OCI-LY7 (cell line): ENCODE measurements at regions of chr9 and their contacts with region 1.

Region 1: DNA sequence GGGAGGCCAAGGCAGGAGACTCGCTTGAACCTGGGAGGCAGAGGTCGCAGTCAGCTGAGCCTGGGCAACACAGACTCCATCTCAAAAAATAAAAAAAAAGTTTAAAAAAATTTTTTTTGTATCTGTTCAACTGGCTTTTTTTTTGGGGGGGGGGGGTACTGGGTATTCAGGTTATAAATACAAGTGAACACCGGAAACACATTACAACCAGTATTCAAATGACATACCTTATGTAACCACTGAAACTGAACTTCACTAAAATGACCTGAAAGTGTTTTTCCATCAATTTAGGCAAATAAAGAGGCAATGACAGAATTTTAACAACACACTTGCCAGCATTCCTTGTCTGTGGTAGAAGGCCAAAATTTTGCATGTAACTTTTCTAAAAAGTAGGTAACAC is 33.5 kb downstream of the STRBP start:
- DNase-seq: peak; percentile 81
- H3K4me3 ChIP-seq: peak overlapping the region; percentile 39
- H3K27ac ChIP-seq: peak overlapping the region; percentile 88
- H3K4me1 ChIP-seq: peaks cover 93% of the 10 kb centered on the region
- CTCF ChIP-seq: no peak

Region 2: GRCh38 chr9:123251741-123252140 is 16.9 kb after region 1 on chr9:
- CTCF ChIA-PET with region 1: interaction called, 4 read pairs
- POLR2A ChIA-PET with region 1: interaction called, 29 read pairs
- intact Hi-C with region 1: no loop called
- DNase-seq: no peak
- H3K4me3 ChIP-seq: no peak overlapping the region
- H3K27ac ChIP-seq: no peak overlapping the region
- H3K4me1 ChIP-seq: peaks cover 31% of the 10 kb centered on the region
- CTCF ChIP-seq: no peak

Region 3: GRCh38 chr9:123262338-123262737 is 27.5 kb after region 1 on chr9:
- CTCF ChIA-PET with region 1: no interaction called
- POLR2A ChIA-PET with region 1: interaction called, 31 read pairs
- intact Hi-C with region 1: no loop called
- DNase-seq: no peak
- H3K4me3 ChIP-seq: no peak overlapping the region
- H3K27ac ChIP-seq: no peak overlapping the region
- H3K4me1 ChIP-seq: peaks cover 75% of the 10 kb centered on the region
- CTCF ChIP-seq: no peak

Region 4: DNA sequence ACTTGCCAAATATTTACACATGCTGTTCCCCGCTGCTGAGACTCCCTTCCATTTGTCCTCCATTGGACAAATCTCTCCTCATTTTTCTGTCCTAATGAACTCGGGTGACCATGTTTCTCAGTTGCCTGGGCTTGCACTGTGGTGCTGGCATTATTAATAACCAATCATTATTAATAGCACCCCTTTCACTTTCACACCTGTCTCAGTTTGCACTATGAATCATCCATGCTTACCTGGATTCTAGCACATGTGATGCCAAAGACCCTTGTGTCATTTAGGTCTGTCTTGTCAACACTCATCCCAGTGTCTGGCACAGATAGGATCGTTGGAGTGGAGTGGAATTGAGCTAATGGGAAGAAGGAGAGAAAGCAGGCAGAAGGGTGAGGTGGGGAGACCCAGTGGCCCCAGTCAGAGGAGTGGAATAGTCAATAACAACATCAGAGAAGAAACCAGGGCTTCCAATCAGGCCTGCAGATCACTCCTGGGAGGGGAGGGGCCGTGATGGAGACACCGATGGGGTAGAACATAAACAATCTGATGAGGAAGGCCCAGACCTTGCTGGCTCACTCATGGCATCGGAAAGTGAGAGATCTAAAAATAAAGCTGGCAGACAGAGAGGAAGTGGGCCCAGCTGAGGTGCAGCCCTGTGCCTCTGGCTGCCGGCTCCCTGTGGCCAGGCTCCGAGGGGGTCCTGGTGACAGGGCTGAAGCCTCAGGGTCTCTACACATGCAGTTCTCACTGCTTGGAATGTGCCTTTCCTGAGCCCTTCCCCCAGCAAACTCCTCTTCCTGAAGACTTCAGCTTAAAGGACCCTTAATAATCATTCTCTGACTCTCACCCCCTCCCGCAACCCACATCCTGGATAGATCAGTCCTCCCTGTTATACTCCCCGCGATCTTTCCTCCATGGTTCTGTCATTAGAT is 87.7 kb after region 1 on chr9:
- CTCF ChIA-PET with region 1: no interaction called
- POLR2A ChIA-PET with region 1: interaction called, 9 read pairs
- intact Hi-C with region 1: loop called (anchors 5 kb)
- DNase-seq: peak; percentile 87
- H3K4me3 ChIP-seq: peak overlapping the region; percentile 41
- H3K27ac ChIP-seq: peak overlapping the region; percentile 63
- H3K4me1 ChIP-seq: peaks cover 57% of the 10 kb centered on the region
- CTCF ChIP-seq: no peak

Region 5: DNA sequence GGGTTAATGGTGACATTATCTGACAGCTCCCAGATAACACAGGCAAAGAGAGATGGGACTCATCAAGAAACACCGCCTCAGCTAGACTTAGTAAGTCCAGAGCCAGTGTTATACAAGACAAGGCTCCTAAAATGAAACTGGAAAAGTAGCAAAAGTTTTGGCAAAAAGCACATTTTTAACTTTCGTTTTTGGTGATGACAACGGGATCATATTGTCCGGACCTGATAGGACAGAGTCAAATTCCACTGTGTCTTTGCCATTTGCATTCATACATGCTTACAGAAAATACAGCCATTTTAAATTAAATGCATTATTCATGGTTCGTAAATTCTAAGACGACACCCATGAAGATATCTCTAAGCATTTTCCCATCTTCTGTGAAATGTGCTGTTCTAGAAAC is 273.2 kb after region 1 on chr9:
- CTCF ChIA-PET with region 1: no interaction called
- POLR2A ChIA-PET with region 1: no interaction called
- intact Hi-C with region 1: no loop called
- DNase-seq: no peak
- H3K4me3 ChIP-seq: no peak overlapping the region
- H3K27ac ChIP-seq: no peak overlapping the region
- H3K4me1 ChIP-seq: no peaks in the 10 kb centered on the region
- CTCF ChIP-seq: no peak